Heart left ventricle (tissue), 16 donors: ENCODE measurements at regions of chr11 and their contacts with region 1.

Region 1: GRCh38 chr11:125625630-125626287 is 796 bp downstream of the CHEK1 start:
- DNase-seq: peak; percentile 86 to 92 (median 90)
- ATAC-seq: peak; percentile 92 to 97 (median 96)
- H3K4me3 ChIP-seq: peak overlapping the region; percentile 40 to 80 (median 74)
- H3K27ac ChIP-seq: peak overlapping the region; percentile 70 to 98 (median 95)
- H3K4me1 ChIP-seq: peaks cover 4 to 23% (median 15%) of the 10 kb centered on the region in 12 donors
- H3K27me3 ChIP-seq: no peaks in the 10 kb centered on the region
- CTCF ChIP-seq: no peak
- POLR2A ChIP-seq: peak in 1 of 2 donors; percentile 48

Region 2: GRCh38 chr11:125568970-125569914 is 56.5 kb before region 1 on chr11 and contains the start of gene EI24:
- intact Hi-C with region 1: loop called in 3 of 10 experiments (anchors 2 to 10 kb)
- DNase-seq: peak; percentile 92 to 96 (median 95)
- ATAC-seq: peak; percentile 100
- H3K4me3 ChIP-seq: peak within 1 kb of the TSS; percentile 84 to 100 (median 96)
- H3K27ac ChIP-seq: peak within 1 kb of the TSS; percentile 71 to 93 (median 87)
- H3K4me1 ChIP-seq: peaks cover 0 to 22% (median 10%) of the 10 kb centered on the region in 12 donors
- H3K27me3 ChIP-seq: no peaks in the 10 kb centered on the region
- CTCF ChIP-seq: peak; percentile 62 to 93 (median 75)
- POLR2A ChIP-seq: peak; percentile 22 to 88
- total RNA-seq, gene EI24: 47.7 to 72.4 (median 53.8) TPM

Region 3: DNA sequence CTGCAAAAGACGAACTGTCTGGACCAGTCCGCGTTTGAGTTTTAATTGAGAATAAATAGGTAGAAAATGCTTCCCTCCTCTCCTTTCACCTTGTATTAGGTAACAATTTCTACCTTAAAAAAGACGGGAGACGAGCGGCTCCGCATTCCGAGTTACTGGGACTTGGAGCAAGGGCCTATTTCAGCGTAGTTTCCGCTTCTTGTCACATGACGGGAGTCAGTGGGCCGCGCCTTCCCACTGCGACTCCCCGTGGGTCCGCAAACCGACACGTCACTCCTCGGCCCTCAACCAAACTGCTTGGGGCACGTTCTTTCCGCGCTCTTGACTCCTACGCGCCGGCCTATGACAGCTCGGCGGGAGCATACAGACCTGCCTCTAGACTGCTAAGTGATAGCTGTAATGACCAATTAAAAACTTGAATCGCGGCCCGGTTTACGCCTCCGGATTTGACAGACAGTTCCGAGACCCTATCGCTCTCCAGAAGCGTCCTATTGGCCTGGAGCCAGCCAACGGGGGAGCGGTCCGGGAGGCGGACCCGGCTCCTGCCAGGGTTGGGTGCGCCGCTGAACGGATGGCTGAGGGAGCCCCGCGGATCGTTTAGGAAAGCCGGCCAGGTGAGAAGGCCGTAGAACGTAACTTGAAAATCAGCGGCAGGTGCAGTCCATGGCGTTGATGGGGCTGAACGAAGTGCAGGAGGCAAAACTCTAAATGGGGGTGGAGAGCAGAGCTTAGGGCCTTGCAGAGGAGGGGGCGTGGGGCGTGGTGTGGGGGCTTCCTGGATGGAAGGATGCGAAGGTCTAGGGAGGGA is 33.2 kb before region 1 on chr11 and contains the start of gene STT3A:
- intact Hi-C with region 1: loop called in 3 of 10 experiments (anchors 1 to 5 kb)
- DNase-seq: peak; percentile 99 to 100 (median 100)
- ATAC-seq: peak; percentile 99 to 100 (median 99)
- H3K4me3 ChIP-seq: peak within 1 kb of the TSS; percentile 66 to 92 (median 82)
- H3K27ac ChIP-seq: peak within 1 kb of the TSS; percentile 85 to 98 (median 94)
- H3K4me1 ChIP-seq: peaks cover 0 to 38% (median 19%) of the 10 kb centered on the region in 12 donors
- H3K27me3 ChIP-seq: no peaks in the 10 kb centered on the region
- CTCF ChIP-seq: no peak
- POLR2A ChIP-seq: peak; percentile 53 to 92
- total RNA-seq, gene STT3A: 47.6 to 98.6 (median 59.1) TPM

Region 4: GRCh38 chr11:125887373-125888324 is 261.9 kb after region 1 on chr11 and contains the start of gene HYLS1:
- intact Hi-C with region 1: loop called in 2 of 10 experiments (anchors 5 to 10 kb)
- DNase-seq: peak; percentile 93 to 98 (median 95)
- ATAC-seq: peak; percentile 98 to 100 (median 99)
- H3K4me3 ChIP-seq: peak within 1 kb of the TSS; percentile 56 to 95 (median 79)
- H3K27ac ChIP-seq: peak within 1 kb of the TSS; percentile 80 to 98 (median 94)
- H3K4me1 ChIP-seq: peaks cover 0 to 27% (median 5%) of the 10 kb centered on the region in 12 donors
- H3K27me3 ChIP-seq: no peaks in the 10 kb centered on the region
- CTCF ChIP-seq: peak in 9 of 12 donors; percentile 15 to 63 (median 34)
- POLR2A ChIP-seq: peak in 1 of 2 donors; percentile 78
- total RNA-seq, gene HYLS1: 3.4 to 6.9 (median 4.5) TPM